ENCODE measurements at regions of chr12 and their contacts with region 1.

Region 1: GRCh38 chr12:56189176-56189917 is at the start of gene SMARCC2:
- DNase-seq: peak; percentile 87
- H3K4me3 Mint-ChIP-seq: peak within 1 kb of the TSS; percentile 85
- H3K27ac Mint-ChIP-seq: peak within 1 kb of the TSS; percentile 93
- H3K4me1 Mint-ChIP-seq: peaks cover 38% of the 10 kb centered on the region
- H3K27me3 Mint-ChIP-seq: no peaks in the 10 kb centered on the region
- CTCF ChIP-seq: peak; percentile 75
- total RNA-seq, gene SMARCC2: 52.1 and 57.0 TPM in 2 replicates

Region 2: GRCh38 chr12:56087220-56087619 is 102.1 kb before region 1 on chr12:
- CTCF ChIA-PET with region 1: no interaction called
- POLR2A ChIA-PET with region 1: no interaction called
- intact Hi-C with region 1: no loop called
- DNase-seq: peak; percentile 49
- H3K4me3 Mint-ChIP-seq: no peak overlapping the region
- H3K27ac Mint-ChIP-seq: no peak overlapping the region
- H3K4me1 Mint-ChIP-seq: no peaks in the 10 kb centered on the region
- H3K27me3 Mint-ChIP-seq: no peaks in the 10 kb centered on the region
- CTCF ChIP-seq: no peak

Region 3: DNA sequence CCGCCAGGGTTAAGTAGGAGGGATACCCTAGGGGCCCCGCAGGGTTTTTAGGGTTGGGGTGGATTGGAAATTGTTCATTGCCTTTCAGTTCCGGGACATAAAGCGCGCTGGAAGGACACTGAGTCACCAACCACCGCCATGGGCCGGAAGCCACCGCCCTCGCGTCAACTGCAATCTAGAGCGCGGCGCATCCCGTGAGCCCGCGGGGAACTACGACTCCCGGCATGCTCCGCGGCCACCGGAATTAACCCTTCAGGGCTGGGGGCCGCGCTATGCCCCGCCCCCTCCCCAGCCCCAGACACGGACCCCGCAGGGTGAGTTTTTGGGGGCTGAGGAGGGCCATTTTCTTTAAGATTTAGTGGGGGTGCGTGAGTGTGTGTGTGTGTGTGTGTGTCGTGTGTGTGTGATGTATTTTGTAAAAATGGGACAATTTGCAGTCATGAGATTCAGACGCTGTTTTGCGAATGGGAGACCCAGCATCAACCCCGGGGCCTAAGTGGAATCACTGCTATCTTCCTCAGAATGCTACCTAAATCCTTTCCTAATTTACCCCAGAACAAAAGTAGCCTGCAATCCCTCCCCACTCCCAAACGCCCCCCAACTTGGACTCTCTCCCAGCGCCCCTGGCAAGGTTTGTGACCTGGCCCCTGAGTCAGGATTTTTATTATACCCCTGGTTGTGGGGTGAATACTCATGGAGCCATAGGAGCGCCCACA is 36.9 kb before region 1 on chr12 and contains the start of gene MYL6B:
- CTCF ChIA-PET with region 1: interaction called, 4 read pairs
- POLR2A ChIA-PET with region 1: interaction called, 16 read pairs
- intact Hi-C with region 1: no loop called
- DNase-seq: peak; percentile 93
- H3K4me3 Mint-ChIP-seq: peak within 1 kb of the TSS; percentile 75
- H3K27ac Mint-ChIP-seq: peak within 1 kb of the TSS; percentile 62
- H3K4me1 Mint-ChIP-seq: peaks cover 18% of the 10 kb centered on the region
- H3K27me3 Mint-ChIP-seq: no peaks in the 10 kb centered on the region
- CTCF ChIP-seq: no peak
- total RNA-seq, gene MYL6B: 46.0 and 58.0 TPM in 2 replicates

Region 4: DNA sequence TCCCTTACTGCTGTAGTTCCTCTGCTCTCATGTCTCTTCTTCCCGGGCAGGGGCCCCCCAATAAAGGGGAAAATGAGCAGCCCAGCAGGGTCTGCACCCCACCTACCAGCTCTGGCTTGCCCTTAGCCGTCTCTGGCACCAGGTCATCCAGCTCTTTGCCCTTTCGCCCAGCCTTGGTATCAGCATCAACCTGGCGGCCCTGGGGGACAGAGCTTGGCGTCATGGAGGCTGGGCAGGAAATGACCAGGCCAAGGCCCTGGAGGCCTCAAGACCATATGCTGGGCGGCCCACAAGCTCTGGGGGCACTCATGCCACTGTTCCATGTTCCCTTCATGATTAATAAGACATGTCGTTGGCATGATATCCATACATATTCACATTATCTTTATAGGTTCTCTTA is 16.5 kb before region 1 on chr12:
- CTCF ChIA-PET with region 1: interaction called, 9 read pairs
- POLR2A ChIA-PET with region 1: interaction called, 14 read pairs
- intact Hi-C with region 1: no loop called
- DNase-seq: no peak
- H3K4me3 Mint-ChIP-seq: no peak overlapping the region
- H3K27ac Mint-ChIP-seq: no peak overlapping the region
- H3K4me1 Mint-ChIP-seq: no peaks in the 10 kb centered on the region
- H3K27me3 Mint-ChIP-seq: no peaks in the 10 kb centered on the region
- CTCF ChIP-seq: no peak

Region 5: DNA sequence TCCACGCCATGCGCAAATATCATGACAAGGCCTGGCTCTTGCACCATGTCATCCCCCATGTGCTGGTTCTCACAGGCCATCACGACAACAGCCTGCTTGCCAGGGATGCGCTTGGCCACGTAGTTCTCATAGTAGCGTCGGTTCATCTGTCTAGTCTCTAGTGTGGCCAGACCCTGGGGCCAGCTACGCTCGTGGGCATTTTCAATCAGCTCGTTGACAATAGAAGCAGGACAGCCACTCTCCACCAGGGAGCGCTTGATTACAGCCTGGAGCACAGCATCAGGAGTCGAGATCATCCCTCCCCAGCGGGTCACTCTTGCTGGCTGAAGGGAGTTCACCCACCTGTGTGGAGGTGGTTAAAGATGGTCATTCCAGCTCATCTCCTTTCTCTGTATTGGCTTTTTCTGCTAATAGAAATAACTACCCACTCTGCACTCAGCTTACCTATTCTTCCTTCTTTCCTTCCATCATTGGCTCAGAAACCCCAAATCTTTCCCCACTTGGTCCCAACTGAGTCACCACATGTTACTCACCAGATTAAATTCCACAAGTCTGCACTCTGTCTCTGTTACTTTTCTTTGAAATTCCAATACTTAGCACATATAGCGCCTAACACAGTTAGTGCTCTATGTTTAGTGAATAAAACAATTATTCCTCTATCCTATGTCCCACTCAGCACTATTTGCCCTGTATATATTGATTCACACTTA is 17.3 kb after region 1 on chr12:
- CTCF ChIA-PET with region 1: interaction called, 83 read pairs
- POLR2A ChIA-PET with region 1: interaction called, 6 read pairs
- intact Hi-C with region 1: no loop called
- DNase-seq: peak; percentile 54
- H3K4me3 Mint-ChIP-seq: no peak overlapping the region
- H3K27ac Mint-ChIP-seq: no peak overlapping the region
- H3K4me1 Mint-ChIP-seq: peaks cover 5% of the 10 kb centered on the region
- H3K27me3 Mint-ChIP-seq: no peaks in the 10 kb centered on the region
- CTCF ChIP-seq: peak; percentile 28

Region 6: GRCh38 chr12:56387152-56387736 is 197.9 kb after region 1 on chr12:
- CTCF ChIA-PET with region 1: no interaction called
- POLR2A ChIA-PET with region 1: no interaction called
- intact Hi-C with region 1: no loop called
- DNase-seq: no peak
- H3K4me3 Mint-ChIP-seq: no peak overlapping the region
- H3K27ac Mint-ChIP-seq: no peak overlapping the region
- H3K4me1 Mint-ChIP-seq: no peaks in the 10 kb centered on the region
- H3K27me3 Mint-ChIP-seq: no peaks in the 10 kb centered on the region
- CTCF ChIP-seq: no peak